HepG2 (cell line): ENCODE measurements at regions of chr17 and their contacts with region 1.

Region 1: GRCh38 chr17:1716076-1716995 is 6.2 kb upstream of the TLCD2 start:
- DNase-seq: peak; percentile 99
- ATAC-seq: peak; percentile 70
- H3K4me3 ChIP-seq: peak overlapping the region; percentile 86 to 97 (median 90)
- H3K27ac ChIP-seq: peak overlapping the region; percentile 100
- H3K4me1 ChIP-seq: peaks cover 51% of the 10 kb centered on the region
- H3K27me3 ChIP-seq: no peaks in the 10 kb centered on the region; a peak in 1 of 5 replicates
- CTCF ChIP-seq: peak; percentile 38
- EP300 ChIP-seq: 0 out of 4 replicates have a peak, but pooled peaks of 1 of the 2 experiments have one; percentile 45
- POLR2A ChIP-seq: peak; percentile 94 to 95
- RAD21 ChIP-seq: peak; percentile 62

Region 2: GRCh38 chr17:1197781-1198490 is 518.4 kb before region 1 on chr17:
- CTCF ChIA-PET with region 1: no interaction called
- POLR2A ChIA-PET with region 1: no interaction called
- in situ Hi-C with region 1: no loop called
- intact Hi-C with region 1: no loop called
- DNase-seq: no peak
- ATAC-seq: peak; percentile 46; the same call in 1 of the 3 replicates
- H3K4me3 ChIP-seq: no peak overlapping the region
- H3K27ac ChIP-seq: no peak overlapping the region
- H3K4me1 ChIP-seq: no peaks in the 10 kb centered on the region
- H3K27me3 ChIP-seq: peaks cover 5 to 45% of the 10 kb centered on the region in 2 experiments; a peak in 4 of 5 replicates
- CTCF ChIP-seq: no peak
- EP300 ChIP-seq: no peak
- POLR2A ChIP-seq: no peak
- RAD21 ChIP-seq: no peak

Region 3: DNA sequence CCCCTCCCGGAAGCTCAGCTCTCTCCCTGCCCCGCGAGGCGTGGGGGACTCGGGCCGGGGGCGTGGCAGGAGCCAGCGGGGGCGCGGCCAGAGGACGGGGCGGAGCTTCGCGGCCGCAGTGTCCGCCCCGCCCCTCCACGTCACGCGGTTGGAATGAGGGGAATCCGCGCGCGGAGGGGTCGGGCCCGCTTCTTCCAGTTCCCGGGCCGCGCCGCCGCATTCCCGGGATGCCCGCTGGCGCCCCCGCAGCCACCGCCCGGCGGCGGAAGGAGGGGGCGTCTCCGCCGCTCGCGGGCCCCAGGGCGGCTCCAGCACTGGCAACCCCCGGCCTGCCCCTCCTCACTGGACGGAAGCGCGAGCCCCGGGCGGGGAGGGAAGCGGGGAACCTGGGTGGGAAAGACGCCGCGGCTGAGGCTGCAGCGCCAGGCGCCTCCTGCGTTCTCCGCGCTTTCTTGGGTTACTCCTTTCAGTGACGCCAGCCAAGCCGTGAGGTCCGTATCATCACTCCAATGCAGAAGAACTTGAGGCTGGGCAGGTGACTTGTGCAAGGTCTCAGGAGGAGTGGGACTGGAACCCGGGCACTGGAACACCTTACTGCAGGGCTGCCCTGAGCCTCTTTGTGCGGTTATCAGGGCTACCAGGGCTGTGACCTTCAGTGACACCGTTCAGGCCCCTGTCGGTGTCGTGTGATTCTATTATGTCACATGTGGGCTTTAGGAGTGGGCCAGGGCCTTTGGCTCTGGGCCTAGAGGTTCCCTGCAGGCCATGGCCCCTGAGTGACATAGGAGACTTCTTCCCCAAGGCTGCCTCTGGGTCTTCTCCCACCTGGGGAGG is 228.1 kb before region 1 on chr17:
- CTCF ChIA-PET with region 1: no interaction called
- POLR2A ChIA-PET with region 1: no interaction called
- in situ Hi-C with region 1: no loop called
- intact Hi-C with region 1: no loop called
- DNase-seq: peak; percentile 70
- ATAC-seq: peak; percentile 33
- H3K4me3 ChIP-seq: peak overlapping the region; percentile 47 to 70 (median 70)
- H3K27ac ChIP-seq: peak overlapping the region; percentile 74
- H3K4me1 ChIP-seq: peaks cover 56% of the 10 kb centered on the region
- H3K27me3 ChIP-seq: no peaks in the 10 kb centered on the region; a peak in 1 of 5 replicates
- CTCF ChIP-seq: peak; percentile 19; the same call in 1 of the 2 replicates
- EP300 ChIP-seq: no peak
- POLR2A ChIP-seq: peak; percentile 62 to 69; a peak in 3 of 4 replicates
- RAD21 ChIP-seq: peak; percentile 29; the same call in 1 of the 2 replicates

Region 4: GRCh38 chr17:1684378-1685189 is 31.8 kb before region 1 on chr17 and contains the start of gene PRPF8:
- CTCF ChIA-PET with region 1: no interaction called
- POLR2A ChIA-PET with region 1: interaction called, 16 read pairs
- in situ Hi-C with region 1: no loop called
- intact Hi-C with region 1: loop called (anchors 2 kb)
- DNase-seq: peak; percentile 94
- ATAC-seq: peak; percentile 99
- H3K4me3 ChIP-seq: peak within 1 kb of the TSS; percentile 88 to 90 (median 89)
- H3K27ac ChIP-seq: peak within 1 kb of the TSS; percentile 88
- H3K4me1 ChIP-seq: peaks cover 28% of the 10 kb centered on the region
- H3K27me3 ChIP-seq: no peaks in the 10 kb centered on the region
- CTCF ChIP-seq: no peak
- EP300 ChIP-seq: 0 out of 4 replicates have a peak, but pooled peaks of 1 of the 2 experiments have one; percentile 7
- POLR2A ChIP-seq: peak; percentile 92 to 93
- RAD21 ChIP-seq: no peak; the same call in 1 of the 2 replicates
- total RNA-seq, gene PRPF8: 112 and 318 TPM in 2 replicates

Region 5: GRCh38 chr17:1736348-1737281 is 20.3 kb after region 1 on chr17:
- CTCF ChIA-PET with region 1: no interaction called
- POLR2A ChIA-PET with region 1: interaction called, 184 read pairs
- in situ Hi-C with region 1: no loop called
- intact Hi-C with region 1: no loop called
- DNase-seq: peak; percentile 98
- ATAC-seq: peak; percentile 92
- H3K4me3 ChIP-seq: peak overlapping the region in 2 of 3 experiments; percentile 57 to 60; a peak in 3 of 6 replicates
- H3K27ac ChIP-seq: peak overlapping the region; percentile 83
- H3K4me1 ChIP-seq: peaks cover 51% of the 10 kb centered on the region
- H3K27me3 ChIP-seq: no peaks in the 10 kb centered on the region
- CTCF ChIP-seq: peak; percentile 12
- EP300 ChIP-seq: peak; percentile 92 to 99
- POLR2A ChIP-seq: peak in 1 of 2 experiments; percentile 45; a peak in 1 of 4 replicates
- RAD21 ChIP-seq: peak; percentile 44

Region 6: DNA sequence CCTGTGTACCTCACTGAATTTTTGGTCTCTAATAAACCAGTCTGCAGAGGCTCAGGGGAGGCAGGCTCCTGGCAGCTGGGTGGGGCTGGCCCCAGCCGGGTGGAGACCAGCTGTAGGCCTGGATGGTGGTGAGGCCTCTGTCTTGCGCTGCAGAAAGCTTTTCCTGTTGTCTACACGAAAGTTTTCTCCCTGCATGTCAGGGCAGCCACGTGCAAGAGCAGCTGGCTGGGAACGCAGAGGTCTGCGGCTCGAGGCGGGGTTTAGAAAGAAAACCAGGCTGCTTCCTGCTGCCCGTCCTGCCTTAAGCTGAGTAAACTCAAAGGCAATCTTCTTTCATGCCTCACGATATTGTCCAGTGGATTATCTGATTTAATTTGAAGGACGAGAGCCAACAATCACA is 47.9 kb after region 1 on chr17:
- CTCF ChIA-PET with region 1: no interaction called
- POLR2A ChIA-PET with region 1: interaction called, 480 read pairs
- in situ Hi-C with region 1: loop called (anchors 5 kb)
- intact Hi-C with region 1: loop called (anchors 2 kb)
- DNase-seq: no peak
- ATAC-seq: no peak
- H3K4me3 ChIP-seq: peak overlapping the region; percentile 33 to 94 (median 88); a peak in 5 of 6 replicates
- H3K27ac ChIP-seq: peak overlapping the region; percentile 99
- H3K4me1 ChIP-seq: peaks cover 64% of the 10 kb centered on the region
- H3K27me3 ChIP-seq: no peaks in the 10 kb centered on the region
- CTCF ChIP-seq: no peak
- EP300 ChIP-seq: no peak
- POLR2A ChIP-seq: 0 out of 4 replicates have a peak, but pooled peaks of 1 of the 2 experiments have one; percentile 18
- RAD21 ChIP-seq: no peak

Region 7: DNA sequence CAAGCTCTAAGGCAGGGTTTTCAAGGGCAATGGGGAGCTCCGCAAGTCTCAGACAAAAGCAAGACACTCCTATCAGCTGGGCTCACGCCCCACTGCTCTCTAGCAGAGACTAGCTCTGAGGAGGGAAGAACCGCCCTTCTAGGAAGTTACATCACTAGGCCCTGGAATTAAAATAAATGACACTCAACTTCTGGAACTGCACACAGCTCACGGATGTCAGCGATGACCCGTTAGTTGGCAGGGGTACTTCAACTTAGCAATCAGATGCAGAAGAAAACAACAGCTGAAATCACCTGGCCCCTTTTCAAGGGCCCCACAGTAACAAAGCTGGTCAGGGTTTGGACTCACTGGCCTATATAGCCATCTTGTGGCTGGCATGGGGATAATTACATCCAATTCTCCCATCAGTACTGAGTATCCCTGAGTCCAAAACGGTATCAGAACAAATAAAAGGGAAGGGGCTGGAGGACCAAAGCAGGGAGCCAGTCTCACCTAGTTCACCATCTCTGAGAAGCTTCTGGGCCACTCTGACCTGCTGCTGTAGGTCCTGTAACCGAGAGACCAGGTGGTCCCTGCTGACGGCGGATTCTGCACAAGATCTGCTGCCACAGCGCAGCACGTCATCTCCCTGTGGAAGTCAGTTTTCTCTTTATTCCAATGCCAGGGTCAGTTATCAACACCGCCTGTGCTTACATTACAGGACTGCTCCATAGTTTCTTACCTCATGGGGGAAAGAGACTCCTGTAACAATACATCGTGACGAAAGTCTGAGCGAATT is 67.7 kb after region 1 on chr17:
- CTCF ChIA-PET with region 1: interaction called, 24 read pairs
- POLR2A ChIA-PET with region 1: interaction called, 43 read pairs
- in situ Hi-C with region 1: no loop called
- intact Hi-C with region 1: loop called (anchors 1 kb)
- DNase-seq: peak; percentile 67
- ATAC-seq: peak; percentile 87
- H3K4me3 ChIP-seq: no peak overlapping the region
- H3K27ac ChIP-seq: no peak overlapping the region
- H3K4me1 ChIP-seq: peaks cover 7% of the 10 kb centered on the region
- H3K27me3 ChIP-seq: no peaks in the 10 kb centered on the region
- CTCF ChIP-seq: peak; percentile 83
- EP300 ChIP-seq: no peak
- POLR2A ChIP-seq: no peak
- RAD21 ChIP-seq: peak; percentile 84

Region 8: DNA sequence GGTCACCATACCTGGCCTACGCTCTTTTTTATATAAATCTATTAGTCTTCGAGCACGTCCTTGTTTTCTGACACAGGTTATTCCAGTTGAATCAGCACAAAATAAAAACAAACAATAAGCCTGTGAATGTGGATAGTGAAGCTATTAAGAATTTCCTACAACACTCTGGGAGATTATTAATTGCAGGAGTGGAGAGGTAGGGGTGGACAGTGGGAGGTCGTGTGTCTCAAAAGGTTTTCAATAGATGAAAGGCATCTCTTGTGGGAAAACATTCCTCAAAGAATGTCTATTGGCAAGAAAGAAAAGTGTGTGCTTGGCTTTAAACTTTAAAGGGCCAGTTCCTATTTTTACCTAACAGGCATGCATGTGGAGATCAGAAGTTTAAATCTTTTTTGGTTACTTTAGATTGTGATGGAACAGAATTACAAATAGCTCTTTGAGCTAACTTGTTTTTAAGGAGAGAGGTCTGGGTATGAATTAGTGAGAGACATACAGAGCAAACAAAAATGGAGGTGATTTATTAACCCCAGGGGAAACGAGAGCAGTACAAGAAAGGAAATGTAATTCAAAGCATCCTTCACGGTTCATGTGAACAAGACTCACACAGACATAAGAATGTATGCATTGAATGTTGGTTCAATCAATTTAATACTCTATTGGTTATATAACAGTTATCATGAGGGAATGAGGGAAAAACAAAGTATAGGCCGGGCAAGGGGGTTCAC is 104.4 kb after region 1 on chr17:
- CTCF ChIA-PET with region 1: no interaction called
- POLR2A ChIA-PET with region 1: no interaction called
- in situ Hi-C with region 1: no loop called
- intact Hi-C with region 1: no loop called
- DNase-seq: no peak
- ATAC-seq: no peak
- H3K4me3 ChIP-seq: no peak overlapping the region
- H3K27ac ChIP-seq: no peak overlapping the region
- H3K4me1 ChIP-seq: peaks cover 21% of the 10 kb centered on the region
- H3K27me3 ChIP-seq: no peaks in the 10 kb centered on the region
- CTCF ChIP-seq: no peak
- EP300 ChIP-seq: no peak
- POLR2A ChIP-seq: no peak
- RAD21 ChIP-seq: no peak

Region 9: GRCh38 chr17:1865252-1866037 is 149.1 kb after region 1 on chr17:
- CTCF ChIA-PET with region 1: interaction called, 7 read pairs
- POLR2A ChIA-PET with region 1: interaction called, 5 read pairs
- in situ Hi-C with region 1: no loop called
- intact Hi-C with region 1: loop called (anchors 10 kb)
- DNase-seq: peak; percentile 35
- ATAC-seq: no peak
- H3K4me3 ChIP-seq: no peak overlapping the region
- H3K27ac ChIP-seq: no peak overlapping the region
- H3K4me1 ChIP-seq: no peaks in the 10 kb centered on the region
- H3K27me3 ChIP-seq: no peaks in the 10 kb centered on the region
- CTCF ChIP-seq: peak; percentile 56
- EP300 ChIP-seq: no peak
- POLR2A ChIP-seq: no peak
- RAD21 ChIP-seq: peak; percentile 46